Prostate gland (tissue), 2 donors: ENCODE measurements at regions of chr1 and their contacts with region 1.

Region 1: GRCh38 chr1:156212833-156213643 is at the start of gene PMF1:
- DNase-seq: peak; percentile 98
- H3K4me3 ChIP-seq: peak within 1 kb of the TSS; percentile 49 to 56
- H3K27ac ChIP-seq: peak within 1 kb of the TSS; percentile 93
- H3K4me1 ChIP-seq: peaks cover 13% of the 10 kb centered on the region
- H3K27me3 ChIP-seq: no peaks in the 10 kb centered on the region
- CTCF ChIP-seq: peak in 1 of 4 experiments; percentile 18
- POLR2A ChIP-seq: peak; percentile 47
- total RNA-seq, gene PMF1: 64.6 to 125 TPM

Region 2: GRCh38 chr1:156096640-156097391 is 116.2 kb before region 1 on chr1:
- intact Hi-C with region 1: loop called (anchors 5 kb)
- DNase-seq: peak; percentile 87
- H3K4me3 ChIP-seq: no peak overlapping the region
- H3K27ac ChIP-seq: peak overlapping the region; percentile 21 to 32
- H3K4me1 ChIP-seq: no peaks in the 10 kb centered on the region
- H3K27me3 ChIP-seq: no peaks in the 10 kb centered on the region
- CTCF ChIP-seq: peak; percentile 89 to 98 (median 97)
- POLR2A ChIP-seq: no peak

Region 3: DNA sequence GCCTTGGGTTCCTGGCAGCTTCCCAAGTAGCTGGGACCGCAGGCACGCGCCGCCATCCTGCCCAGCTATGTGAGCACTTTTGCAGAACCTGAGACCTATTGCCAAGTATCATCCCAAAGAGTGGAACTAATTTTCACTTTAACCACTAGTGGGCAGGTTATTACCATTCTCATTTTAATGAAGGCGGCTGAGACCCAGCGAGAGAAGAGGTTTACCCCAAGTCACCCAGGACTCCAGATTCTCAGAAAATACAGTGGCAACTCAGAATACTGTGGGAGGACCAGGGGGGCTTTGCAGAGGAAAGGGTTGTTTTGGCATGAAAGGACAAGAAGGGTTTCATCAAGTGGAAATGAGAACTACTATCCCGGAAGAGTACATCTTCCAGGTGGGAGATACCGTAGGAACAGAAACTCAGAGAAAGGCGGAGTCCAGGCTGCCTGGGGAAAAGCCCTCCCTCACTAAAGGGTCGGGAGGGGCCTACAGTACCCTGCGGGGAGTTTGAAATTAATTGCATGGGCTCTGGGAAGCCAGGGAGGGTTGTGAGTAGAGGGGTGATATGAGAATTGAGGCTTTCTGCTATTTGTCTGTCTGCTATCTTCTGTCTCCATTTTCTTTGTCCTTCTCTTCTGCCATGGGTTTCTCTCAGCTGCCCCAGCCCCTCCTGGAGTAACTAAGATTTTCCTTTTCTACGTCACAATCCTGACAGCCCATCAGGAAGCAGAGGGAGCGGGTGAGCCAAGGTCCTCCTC is 66.8 kb before region 1 on chr1:
- intact Hi-C with region 1: loop called (anchors 5 kb)
- DNase-seq: peak; percentile 63
- H3K4me3 ChIP-seq: no peak overlapping the region
- H3K27ac ChIP-seq: peak overlapping the region in 1 of 2 donors; percentile 14
- H3K4me1 ChIP-seq: no peaks in the 10 kb centered on the region
- H3K27me3 ChIP-seq: no peaks in the 10 kb centered on the region
- CTCF ChIP-seq: peak; percentile 61 to 83 (median 73)
- POLR2A ChIP-seq: no peak

Region 4: DNA sequence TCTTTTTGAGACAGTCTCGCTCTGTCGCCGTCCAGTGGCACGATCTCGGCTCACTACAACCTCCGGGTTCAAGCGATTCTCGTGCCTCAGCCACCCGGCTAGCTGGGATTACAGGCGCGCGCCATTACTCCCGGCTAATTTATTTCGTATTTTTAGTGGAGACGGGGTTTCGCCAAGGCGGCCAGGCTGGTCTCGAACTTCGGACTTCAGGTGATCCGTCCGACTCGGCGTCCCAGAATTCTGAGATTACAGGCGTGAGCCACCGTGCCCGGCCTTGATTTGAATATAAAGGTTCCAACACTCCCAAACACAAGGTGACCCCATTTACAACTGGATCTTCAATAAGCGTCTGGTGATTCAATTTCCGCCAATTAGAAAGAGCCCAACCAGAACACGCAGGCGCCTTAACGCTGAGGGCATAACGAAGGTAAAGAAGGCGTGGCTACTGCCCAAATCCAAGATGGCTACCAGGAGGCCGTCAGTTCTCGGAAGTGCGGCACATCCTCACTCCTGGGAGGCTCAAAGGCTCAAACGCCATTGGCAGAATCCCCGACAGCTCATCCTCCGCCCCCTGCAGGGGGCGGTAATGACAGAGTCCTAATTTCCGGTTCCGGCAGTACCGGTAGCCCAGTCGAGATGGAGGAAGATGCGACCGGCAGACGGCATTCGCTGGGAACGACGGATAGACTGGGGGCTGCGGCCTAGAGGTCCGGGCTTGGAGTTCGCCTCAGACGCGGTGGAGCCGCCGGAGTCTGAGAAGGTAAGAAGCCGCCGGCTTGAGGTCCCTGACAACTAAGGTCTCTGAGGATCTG is 19.3 kb before region 1 on chr1 and contains the start of gene SLC25A44:
- intact Hi-C with region 1: loop called (anchors 2 kb)
- DNase-seq: peak; percentile 98
- H3K4me3 ChIP-seq: peak within 1 kb of the TSS; percentile 55 to 90
- H3K27ac ChIP-seq: peak within 1 kb of the TSS; percentile 68 to 78
- H3K4me1 ChIP-seq: peaks cover 4% of the 10 kb centered on the region
- H3K27me3 ChIP-seq: no peaks in the 10 kb centered on the region
- CTCF ChIP-seq: peak; percentile 27 to 88 (median 68)
- POLR2A ChIP-seq: peak; percentile 18
- total RNA-seq, gene SLC25A44: 14.2 to 16.5 TPM